Kidney (tissue), 22 donors: ENCODE measurements at regions of chr2 and their contacts with region 1.

Region 1: DNA sequence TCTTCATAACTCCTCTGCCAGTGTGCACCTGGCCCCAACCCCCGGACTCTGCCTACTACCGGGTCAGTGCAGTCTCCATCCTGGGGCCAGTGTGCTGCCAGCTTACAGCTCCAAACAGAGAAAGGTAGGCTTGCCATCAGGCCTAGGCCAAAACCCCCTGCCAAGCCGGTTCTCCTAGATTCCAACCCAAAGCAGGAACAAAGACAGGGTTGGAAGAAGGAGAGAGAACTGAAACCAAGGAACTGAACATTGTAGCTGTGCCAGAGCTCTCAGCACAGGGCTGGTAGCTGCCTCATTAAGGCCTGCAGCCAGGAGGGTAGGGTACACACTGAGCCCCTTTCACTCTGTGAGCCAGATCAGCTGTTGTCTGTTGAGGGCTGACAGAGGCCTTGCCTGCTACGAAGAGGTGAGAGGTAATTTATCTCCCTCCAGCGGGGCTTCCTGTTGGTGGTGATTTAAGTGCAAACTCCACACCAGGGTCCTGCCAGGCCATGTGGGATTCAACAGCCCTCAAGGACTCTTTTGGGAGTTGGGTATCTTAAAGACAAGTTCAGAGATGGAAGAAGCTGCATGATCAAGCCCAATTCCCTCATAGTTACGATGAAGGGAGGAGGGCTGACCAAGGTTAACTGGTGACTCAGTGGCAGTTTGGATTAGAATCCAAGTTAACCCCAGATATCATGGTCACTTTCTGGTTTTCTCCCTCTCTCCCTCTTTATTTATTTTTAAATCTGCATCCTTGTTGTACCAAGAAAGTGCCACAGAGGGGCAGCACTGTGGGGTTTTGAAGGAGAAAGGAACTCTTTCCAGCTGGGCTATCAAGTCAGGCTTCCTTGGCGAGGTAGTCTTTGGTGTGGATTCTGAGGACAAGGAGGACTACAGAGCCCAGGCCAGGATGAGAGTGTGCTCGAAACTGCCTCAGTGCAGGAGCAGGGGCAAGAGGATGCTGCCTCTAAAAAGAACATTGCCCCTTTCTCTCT is 48.1 kb downstream of the CYRIA start:
- DNase-seq: peak in 3 of 5 donors; percentile 38 to 51 (median 44)
- H3K4me3 ChIP-seq: no peak overlapping the region
- H3K27ac ChIP-seq: no peak overlapping the region
- H3K4me1 ChIP-seq: no peaks in the 10 kb centered on the region
- H3K27me3 ChIP-seq: no peaks in the 10 kb centered on the region
- CTCF ChIP-seq: peak; percentile 30

Region 2: DNA sequence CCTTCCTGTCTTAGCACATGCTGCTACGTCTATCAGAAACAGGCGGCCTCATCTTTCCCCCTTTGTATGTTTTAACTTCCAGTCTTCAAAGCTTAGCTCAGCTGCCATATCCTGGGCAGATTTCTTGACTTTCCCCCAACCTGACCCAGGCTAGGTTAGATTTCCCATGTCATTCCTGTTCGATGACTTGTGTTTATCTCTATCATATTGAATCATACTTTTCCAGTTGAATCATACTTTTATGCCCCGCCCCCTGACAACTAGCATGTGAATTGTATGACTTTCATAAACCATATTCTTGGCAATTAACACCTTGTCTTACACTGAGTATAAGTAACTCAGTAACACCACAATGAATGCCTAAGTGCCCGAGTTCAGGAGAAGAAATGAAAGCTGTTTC is 80.2 kb before region 1 on chr2:
- intact Hi-C with region 1: no loop called
- DNase-seq: no peak
- H3K4me3 ChIP-seq: no peak overlapping the region
- H3K27ac ChIP-seq: no peak overlapping the region
- H3K4me1 ChIP-seq: no peaks in the 10 kb centered on the region
- H3K27me3 ChIP-seq: no peaks in the 10 kb centered on the region
- CTCF ChIP-seq: no peak

Region 3: GRCh38 chr2:16727256-16727655 is 109.7 kb after region 1 on chr2:
- intact Hi-C with region 1: no loop called
- DNase-seq: no peak
- H3K4me3 ChIP-seq: no peak overlapping the region
- H3K27ac ChIP-seq: no peak overlapping the region
- H3K4me1 ChIP-seq: no peaks in the 10 kb centered on the region
- H3K27me3 ChIP-seq: no peaks in the 10 kb centered on the region
- CTCF ChIP-seq: no peak

Region 4: GRCh38 chr2:16756831-16757644 is 139.5 kb after region 1 on chr2:
- intact Hi-C with region 1: loop called (anchors 5 kb)
- DNase-seq: peak; percentile 73 to 91 (median 84)
- H3K4me3 ChIP-seq: no peak overlapping the region
- H3K27ac ChIP-seq: no peak overlapping the region
- H3K4me1 ChIP-seq: no peaks in the 10 kb centered on the region
- H3K27me3 ChIP-seq: no peaks in the 10 kb centered on the region
- CTCF ChIP-seq: peak; percentile 92